ENCODE measurements at regions of chr10 and their contacts with region 1.

Region 1: DNA sequence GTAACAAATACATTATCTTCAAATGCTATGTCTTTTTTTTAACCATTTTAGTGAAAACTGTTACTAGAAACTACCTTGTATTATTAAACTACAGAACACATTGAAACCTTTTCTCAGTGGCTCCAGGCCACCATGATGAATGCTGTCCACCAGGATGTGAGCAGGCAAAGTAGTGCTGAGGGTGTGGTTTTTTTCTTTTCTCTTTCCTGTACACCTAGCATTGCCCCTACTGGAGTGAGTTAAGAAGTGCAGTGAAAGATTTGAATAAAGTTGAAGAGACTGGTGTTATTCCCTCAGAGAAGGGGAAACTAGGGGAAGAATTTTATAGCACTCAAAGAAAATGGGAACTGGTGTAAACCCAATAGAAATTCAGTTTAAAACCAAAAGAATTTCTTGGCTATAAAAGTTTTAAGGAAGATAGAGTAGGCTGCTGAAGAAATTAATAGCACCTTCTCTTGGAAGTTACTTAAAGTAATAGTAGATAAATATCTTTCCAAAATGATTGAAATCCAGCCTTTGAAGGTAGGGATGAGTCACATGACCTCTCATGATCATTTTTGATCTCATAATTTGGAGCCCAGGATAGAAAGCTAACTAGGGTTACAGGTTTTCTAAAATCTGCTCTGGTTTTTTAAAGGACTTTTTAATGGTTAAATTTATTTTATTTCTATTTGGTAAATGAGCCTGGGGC is 119.9 kb upstream of the SAMD8 start:
- DNase-seq: no peak
- H3K4me3 ChIP-seq: no peak overlapping the region
- H3K27ac ChIP-seq: no peak overlapping the region
- H3K4me1 ChIP-seq: no peaks in the 10 kb centered on the region
- H3K27me3 ChIP-seq: no peaks in the 10 kb centered on the region
- CTCF ChIP-seq: peak in 2 of 3 experiments; percentile 17 to 35; a peak in 2 of 4 replicates
- EP300 ChIP-seq: no peak
- POLR2A ChIP-seq: no peak
- RAD21 ChIP-seq: peak; percentile 30 to 41

Region 2: DNA sequence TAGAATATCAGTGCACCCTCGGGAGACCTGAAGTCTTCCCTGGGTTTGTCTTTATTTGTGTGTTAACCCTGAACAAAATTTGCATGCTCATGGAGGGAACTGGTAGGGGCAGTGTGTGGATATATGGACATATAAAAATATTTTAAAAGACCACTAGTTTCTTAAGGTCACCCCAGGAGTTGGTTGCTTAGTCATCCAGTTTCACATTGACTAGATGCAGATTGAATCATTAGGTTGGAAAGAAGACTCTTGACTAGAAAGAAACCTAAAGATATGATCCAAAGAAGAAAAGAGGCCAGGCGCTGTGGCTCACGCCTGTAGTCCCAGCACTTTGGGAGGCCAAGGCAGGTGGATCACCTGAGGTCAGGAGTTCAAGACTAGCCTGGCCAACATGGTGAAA is 28.0 kb before region 1 on chr10:
- CTCF ChIA-PET with region 1: no interaction called
- POLR2A ChIA-PET with region 1: no interaction called
- DNase-seq: no peak
- H3K4me3 ChIP-seq: no peak overlapping the region
- H3K27ac ChIP-seq: no peak overlapping the region
- H3K4me1 ChIP-seq: peaks cover 0 to 2% (median 0%) of the 10 kb centered on the region in 4 experiments; a peak in 1 of 7 replicates
- H3K27me3 ChIP-seq: no peaks in the 10 kb centered on the region
- CTCF ChIP-seq: no peak
- EP300 ChIP-seq: no peak
- POLR2A ChIP-seq: no peak
- RAD21 ChIP-seq: no peak

Region 3: DNA sequence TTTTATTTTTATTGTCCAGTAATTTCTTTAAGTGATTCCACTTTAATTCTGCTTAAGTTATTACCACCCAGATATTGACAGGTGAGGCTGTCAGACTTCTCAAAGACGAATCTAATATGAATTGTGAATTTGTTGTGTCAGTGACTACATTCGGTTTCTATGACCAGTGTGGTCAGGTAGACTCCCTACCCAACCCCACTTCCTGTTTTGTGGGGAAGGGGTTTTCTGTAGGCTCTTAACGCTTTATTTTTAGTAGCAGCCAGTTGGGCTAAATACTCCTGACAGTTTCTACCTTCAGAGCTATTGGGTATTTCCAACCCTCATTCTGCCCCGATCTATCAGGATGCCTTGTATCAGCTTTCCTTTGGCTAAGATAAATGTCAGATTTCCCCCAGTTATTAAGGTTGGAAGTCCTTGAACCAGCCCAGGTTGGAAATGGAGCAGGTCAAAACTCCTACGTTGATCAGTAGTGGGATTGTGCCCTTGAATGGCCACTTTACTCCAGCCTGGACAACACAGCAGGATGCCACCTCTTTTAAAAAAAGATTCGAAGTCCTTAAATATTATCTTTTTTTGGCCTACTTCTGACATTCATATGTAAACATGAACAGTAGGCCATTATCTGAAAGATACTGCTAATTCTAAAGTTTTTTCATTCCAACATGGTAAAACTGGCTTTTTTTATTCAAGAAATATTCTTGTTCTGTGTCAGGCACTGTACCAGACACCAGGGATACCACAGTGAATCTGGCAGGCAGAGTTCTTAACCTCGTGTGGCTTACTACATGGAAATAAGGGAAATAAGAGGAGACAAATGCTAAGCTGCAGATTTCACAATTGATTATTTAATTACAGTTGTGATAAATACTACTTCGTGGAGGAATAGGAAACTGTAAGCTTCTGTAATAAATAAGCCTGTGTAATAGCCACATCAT is 13.4 kb before region 1 on chr10:
- CTCF ChIA-PET with region 1: interaction called, 12 read pairs
- POLR2A ChIA-PET with region 1: no interaction called
- DNase-seq: no peak
- H3K4me3 ChIP-seq: no peak overlapping the region
- H3K27ac ChIP-seq: no peak overlapping the region
- H3K4me1 ChIP-seq: no peaks in the 10 kb centered on the region
- H3K27me3 ChIP-seq: peaks cover 0 to 1% (median 0%) of the 10 kb centered on the region in 4 experiments; a peak in 1 of 7 replicates
- CTCF ChIP-seq: no peak
- EP300 ChIP-seq: no peak
- POLR2A ChIP-seq: no peak
- RAD21 ChIP-seq: no peak

Region 4: GRCh38 chr10:75062506-75063299 is 71.1 kb after region 1 on chr10:
- CTCF ChIA-PET with region 1: no interaction called
- POLR2A ChIA-PET with region 1: no interaction called
- DNase-seq: no peak
- H3K4me3 ChIP-seq: no peak overlapping the region
- H3K27ac ChIP-seq: no peak overlapping the region
- H3K4me1 ChIP-seq: peaks cover 0 to 5% (median 0%) of the 10 kb centered on the region in 4 experiments; a peak in 3 of 7 replicates
- H3K27me3 ChIP-seq: no peaks in the 10 kb centered on the region
- CTCF ChIP-seq: no peak
- EP300 ChIP-seq: no peak
- POLR2A ChIP-seq: no peak
- RAD21 ChIP-seq: no peak